HepG2 (cell line): ENCODE measurements at regions of chr10 and their contacts with region 1.

Region 1: DNA sequence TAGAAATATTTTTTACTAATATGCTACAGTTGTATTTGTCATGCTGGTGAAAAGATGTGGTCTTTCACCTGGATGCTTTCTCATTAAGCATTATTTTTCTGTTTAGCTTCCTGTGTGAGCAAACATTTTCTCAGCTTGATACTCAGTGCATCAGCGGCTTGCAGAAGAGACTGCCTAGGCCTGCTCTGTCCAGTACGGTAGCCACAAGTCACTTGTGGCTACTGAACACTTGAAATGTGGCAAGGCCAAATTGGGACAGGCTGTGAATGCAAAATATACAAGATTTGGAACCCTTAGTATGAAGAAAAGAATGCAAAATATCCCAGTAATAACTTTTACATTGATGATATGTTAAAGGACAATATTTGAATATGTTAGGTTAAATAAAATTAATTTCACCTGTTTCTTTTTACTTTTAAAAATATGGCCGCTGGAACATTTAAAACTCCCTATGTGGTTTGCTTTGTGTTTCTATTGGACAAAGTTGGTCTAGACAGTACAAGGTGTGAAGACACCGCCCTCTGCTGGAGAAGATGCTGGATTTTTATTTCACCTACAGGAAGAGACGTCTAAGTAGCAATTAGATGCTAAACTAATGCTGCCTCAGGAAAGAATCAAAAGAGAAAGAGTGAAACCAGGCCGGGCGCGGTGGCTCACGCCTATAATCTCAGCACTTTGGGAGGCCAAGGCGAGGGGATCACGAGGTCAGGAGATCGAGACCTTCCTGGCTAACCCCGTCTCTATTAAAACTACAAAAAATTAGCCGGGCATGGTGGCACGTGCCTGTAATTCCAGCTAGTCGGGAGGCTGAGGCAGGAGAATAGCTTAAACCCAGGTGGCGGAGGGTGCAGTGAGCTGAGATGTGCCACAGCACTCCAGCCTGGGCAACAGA is 5.3 kb downstream of the SRGN start:
- DNase-seq: peak; percentile 79
- ATAC-seq: peak; percentile 90
- H3K4me3 ChIP-seq: no peak overlapping the region
- H3K27ac ChIP-seq: no peak overlapping the region
- H3K4me1 ChIP-seq: 0 out of 2 replicates have a peak, but pooled peaks cover 9% of the 10 kb centered on the region
- H3K27me3 ChIP-seq: no peaks in the 10 kb centered on the region; a peak in 1 of 5 replicates
- CTCF ChIP-seq: peak; percentile 81
- EP300 ChIP-seq: no peak
- POLR2A ChIP-seq: no peak
- RAD21 ChIP-seq: peak; percentile 60

Region 2: GRCh38 chr10:68955832-68956532 is 137.2 kb before region 1 on chr10 and contains the start of gene DDX21:
- CTCF ChIA-PET with region 1: no interaction called
- POLR2A ChIA-PET with region 1: no interaction called
- in situ Hi-C with region 1: no loop called
- intact Hi-C with region 1: loop called (anchors 5 kb)
- DNase-seq: peak; percentile 92
- ATAC-seq: peak; percentile 96
- H3K4me3 ChIP-seq: peak within 1 kb of the TSS; percentile 66 to 96 (median 90)
- H3K27ac ChIP-seq: peak within 1 kb of the TSS; percentile 91
- H3K4me1 ChIP-seq: peaks cover 32% of the 10 kb centered on the region
- H3K27me3 ChIP-seq: no peaks in the 10 kb centered on the region; a peak in 1 of 5 replicates
- CTCF ChIP-seq: peak; percentile 73
- EP300 ChIP-seq: no peak; a peak in 1 of 4 replicates
- POLR2A ChIP-seq: peak; percentile 86 to 87
- RAD21 ChIP-seq: no peak
- total RNA-seq, gene DDX21: 147 and 243 TPM in 2 replicates

Region 3: GRCh38 chr10:68981074-68981473 is 112.1 kb before region 1 on chr10:
- CTCF ChIA-PET with region 1: no interaction called
- POLR2A ChIA-PET with region 1: no interaction called
- in situ Hi-C with region 1: no loop called
- intact Hi-C with region 1: loop called (anchors 1 kb)
- DNase-seq: peak; percentile 19
- ATAC-seq: peak; percentile 75
- H3K4me3 ChIP-seq: no peak overlapping the region
- H3K27ac ChIP-seq: no peak overlapping the region
- H3K4me1 ChIP-seq: no peaks in the 10 kb centered on the region
- H3K27me3 ChIP-seq: no peaks in the 10 kb centered on the region
- CTCF ChIP-seq: no peak
- EP300 ChIP-seq: no peak
- POLR2A ChIP-seq: no peak
- RAD21 ChIP-seq: no peak

Region 4: DNA sequence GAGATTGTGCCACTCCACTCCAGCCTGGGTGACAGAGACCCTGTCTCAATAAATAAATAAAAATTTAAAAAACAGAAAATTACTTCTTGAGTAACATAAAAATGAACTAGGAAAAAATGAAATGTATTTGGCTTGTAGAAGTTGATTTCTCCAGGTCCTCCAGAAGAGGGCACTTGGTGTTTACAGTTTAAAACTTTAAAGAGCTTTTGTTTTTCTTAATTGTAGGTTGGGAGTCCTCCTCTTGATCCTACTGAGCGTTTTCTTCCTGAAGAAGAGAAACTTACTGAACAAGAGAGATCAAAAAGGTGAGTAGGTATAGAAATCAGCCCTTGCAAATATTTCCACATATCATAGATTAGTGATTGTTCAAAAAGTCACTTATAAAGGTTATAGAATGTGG is 88.4 kb before region 1 on chr10:
- CTCF ChIA-PET with region 1: interaction called, 18 read pairs
- POLR2A ChIA-PET with region 1: no interaction called
- in situ Hi-C with region 1: loop called (anchors 5 kb)
- intact Hi-C with region 1: loop called (anchors 1 kb)
- DNase-seq: peak; percentile 17
- ATAC-seq: no peak
- H3K4me3 ChIP-seq: no peak overlapping the region
- H3K27ac ChIP-seq: no peak overlapping the region
- H3K4me1 ChIP-seq: peaks cover 6% of the 10 kb centered on the region; the same call in 1 of the 2 replicates
- H3K27me3 ChIP-seq: no peaks in the 10 kb centered on the region
- CTCF ChIP-seq: peak; percentile 42
- EP300 ChIP-seq: no peak
- POLR2A ChIP-seq: no peak
- RAD21 ChIP-seq: no peak